Heart left ventricle (tissue), 16 donors: ENCODE measurements at regions of chrX and their contacts with region 1.

Region 1: DNA sequence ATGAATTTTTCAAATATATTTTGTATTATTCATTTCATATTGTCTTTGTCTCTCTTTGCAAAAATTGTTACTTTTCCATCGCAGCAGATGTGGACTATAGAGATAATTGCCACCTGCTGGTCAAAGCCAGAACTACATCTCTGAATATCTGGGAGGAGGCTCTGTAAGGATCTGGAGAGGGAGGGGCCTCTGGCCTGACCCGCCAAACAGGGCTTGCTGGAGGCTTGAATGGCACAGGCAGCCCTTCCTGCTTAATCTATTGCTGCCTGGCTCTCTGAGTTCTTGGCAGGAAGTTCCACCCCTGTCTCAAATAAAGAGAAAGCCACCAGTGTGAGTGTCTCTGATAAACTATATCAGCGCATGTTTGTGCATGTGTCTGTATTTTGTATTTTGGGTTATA is 132.4 kb downstream of the ZMAT1 start:
- DNase-seq: peak; percentile 82 to 88 (median 83)
- ATAC-seq: peak; percentile 94 to 100 (median 100)
- H3K4me3 ChIP-seq: peak overlapping the region in 9 of 12 donors; percentile 15 to 44 (median 24)
- H3K27ac ChIP-seq: peak overlapping the region in 1 of 12 donors; percentile 38
- H3K4me1 ChIP-seq: peaks cover 0 to 3% (median 0%) of the 10 kb centered on the region in 12 donors
- H3K27me3 ChIP-seq: peaks cover 0 to 4% (median 0%) of the 10 kb centered on the region in 9 donors
- CTCF ChIP-seq: peak; percentile 64 to 77 (median 73)
- POLR2A ChIP-seq: peak in 1 of 2 donors; percentile 14

Region 2: DNA sequence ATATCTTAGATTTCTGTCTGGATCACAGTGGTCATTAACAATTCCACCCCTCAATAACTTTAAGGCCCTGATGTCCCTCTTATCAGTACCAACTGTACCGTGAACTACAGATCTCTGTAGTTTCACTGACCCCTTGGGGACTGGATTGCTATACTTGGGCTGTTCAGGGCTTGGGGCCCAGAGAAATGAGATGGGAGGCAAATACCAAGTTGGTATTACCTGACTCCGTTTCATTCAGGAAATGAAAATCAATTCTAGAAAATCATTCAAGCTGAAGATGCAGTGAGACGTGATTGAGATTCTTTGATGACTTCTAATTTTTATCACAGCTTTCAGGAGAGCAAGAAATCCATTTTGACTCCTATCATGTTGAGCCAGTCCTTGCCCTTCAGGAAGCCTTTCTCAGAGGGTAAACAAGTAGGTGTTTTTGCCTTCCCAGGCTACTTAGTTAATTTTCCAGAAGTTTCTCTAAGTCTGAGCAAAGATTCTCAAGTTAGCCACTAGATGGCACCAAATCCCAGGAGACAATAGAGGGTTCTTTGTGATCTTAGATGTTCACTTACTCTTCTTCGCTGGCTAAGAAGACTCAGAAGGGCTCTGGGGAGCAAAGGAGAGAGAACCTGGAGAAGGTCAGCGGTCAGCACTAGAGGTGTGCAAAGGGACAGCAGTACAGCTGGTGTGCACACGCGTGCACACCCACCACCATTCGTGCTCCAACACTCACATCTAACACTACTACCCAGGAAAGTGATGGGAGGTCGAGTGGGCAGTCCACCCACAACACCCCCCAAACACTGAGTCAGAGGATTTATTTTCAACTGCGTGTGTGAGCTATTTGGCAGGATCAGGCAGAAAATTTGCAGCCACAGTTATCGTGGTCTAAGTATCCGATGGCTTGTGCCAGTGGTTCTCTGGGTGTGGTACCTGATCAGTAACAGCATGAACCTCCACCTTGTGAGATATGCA is 383.9 kb before region 1 on chrX:
- intact Hi-C with region 1: loop called (anchors 2 to 10 kb)
- DNase-seq: peak in 2 of 5 donors; percentile 16 to 19
- ATAC-seq: peak in 3 of 4 donors; percentile 29 to 34 (median 34)
- H3K4me3 ChIP-seq: no peak overlapping the region
- H3K27ac ChIP-seq: peak overlapping the region in 10 of 12 donors; percentile 17 to 77 (median 60)
- H3K4me1 ChIP-seq: peaks cover 0 to 43% (median 12%) of the 10 kb centered on the region in 12 donors
- H3K27me3 ChIP-seq: peaks cover 0 to 29% (median 0%) of the 10 kb centered on the region in 9 donors
- CTCF ChIP-seq: peak; percentile 49 to 85 (median 69)
- POLR2A ChIP-seq: no peak

Region 3: GRCh38 chrX:101595739-101596419 is 203.5 kb before region 1 on chrX:
- intact Hi-C with region 1: loop called in 9 of 10 experiments (anchors 5 kb)
- DNase-seq: peak in 2 of 5 donors; percentile 18 to 21
- ATAC-seq: peak in 3 of 4 donors; percentile 56 to 84 (median 60)
- H3K4me3 ChIP-seq: no peak overlapping the region
- H3K27ac ChIP-seq: no peak overlapping the region
- H3K4me1 ChIP-seq: no peaks in the 10 kb centered on the region
- H3K27me3 ChIP-seq: peaks cover 0 to 31% (median 0%) of the 10 kb centered on the region in 9 donors
- CTCF ChIP-seq: peak; percentile 36 to 66 (median 54)
- POLR2A ChIP-seq: no peak

Region 4: GRCh38 chrX:101605728-101606127 is 193.7 kb before region 1 on chrX:
- intact Hi-C with region 1: loop called in 1 of 10 experiments (anchors 5 kb)
- DNase-seq: no peak
- ATAC-seq: no peak
- H3K4me3 ChIP-seq: no peak overlapping the region
- H3K27ac ChIP-seq: no peak overlapping the region
- H3K4me1 ChIP-seq: no peaks in the 10 kb centered on the region
- H3K27me3 ChIP-seq: peaks cover 0 to 22% (median 0%) of the 10 kb centered on the region in 9 donors
- CTCF ChIP-seq: no peak
- POLR2A ChIP-seq: no peak

Region 5: GRCh38 chrX:101617211-101618191 is 181.9 kb before region 1 on chrX and contains the start of gene ARMCX6:
- intact Hi-C with region 1: loop called in 4 of 10 experiments (anchors 5 kb)
- DNase-seq: peak; percentile 79 to 87 (median 83)
- ATAC-seq: peak; percentile 86 to 96 (median 92)
- H3K4me3 ChIP-seq: peak within 1 kb of the TSS; percentile 38 to 85 (median 70)
- H3K27ac ChIP-seq: peak within 1 kb of the TSS in 11 of 12 donors; percentile 54 to 89 (median 79)
- H3K4me1 ChIP-seq: peaks cover 0 to 10% (median 2%) of the 10 kb centered on the region in 12 donors
- H3K27me3 ChIP-seq: no peaks in the 10 kb centered on the region
- CTCF ChIP-seq: peak in 11 of 12 donors; percentile 22 to 65 (median 42)
- POLR2A ChIP-seq: peak in 1 of 2 donors; percentile 17
- total RNA-seq, gene ARMCX6: 17.9 to 58.7 (median 33.2) TPM

Region 6: DNA sequence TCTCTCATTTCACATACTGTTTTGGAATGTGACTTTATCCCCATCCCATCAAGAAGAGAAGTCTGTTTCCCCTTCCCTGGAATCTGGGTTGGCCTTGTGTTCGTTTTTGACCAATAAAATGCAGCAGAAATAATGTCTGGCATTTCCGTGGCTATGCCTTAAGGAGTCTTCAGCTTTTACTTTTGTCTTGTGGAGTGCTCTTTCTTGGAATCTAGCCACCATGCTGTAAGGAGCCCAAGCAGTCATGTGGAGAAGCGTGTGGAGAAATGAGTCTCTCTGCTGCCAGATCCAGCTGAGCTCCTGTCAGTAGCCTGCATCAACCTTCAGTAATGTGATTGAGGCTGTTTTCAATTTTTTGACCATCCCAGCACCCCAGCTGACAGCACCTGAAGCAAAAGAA is 55.3 kb before region 1 on chrX:
- intact Hi-C with region 1: no loop called
- DNase-seq: no peak
- ATAC-seq: no peak
- H3K4me3 ChIP-seq: no peak overlapping the region
- H3K27ac ChIP-seq: no peak overlapping the region
- H3K4me1 ChIP-seq: no peaks in the 10 kb centered on the region
- H3K27me3 ChIP-seq: peaks cover 0 to 11% (median 0%) of the 10 kb centered on the region in 9 donors
- CTCF ChIP-seq: no peak
- POLR2A ChIP-seq: no peak

Region 7: GRCh38 chrX:101759000-101759399 is 40.4 kb before region 1 on chrX:
- intact Hi-C with region 1: loop called in 1 of 10 experiments (anchors 2 kb)
- DNase-seq: peak in 3 of 5 donors; percentile 7 to 29 (median 15)
- ATAC-seq: peak in 1 of 4 donors; percentile 65
- H3K4me3 ChIP-seq: no peak overlapping the region
- H3K27ac ChIP-seq: no peak overlapping the region
- H3K4me1 ChIP-seq: no peaks in the 10 kb centered on the region
- H3K27me3 ChIP-seq: peaks cover 0 to 39% (median 0%) of the 10 kb centered on the region in 9 donors
- CTCF ChIP-seq: peak; percentile 20 to 53 (median 38)
- POLR2A ChIP-seq: no peak